IMR-90 (cell line): ENCODE measurements at regions of chr1 and their contacts with region 1.

Region 1: GRCh38 chr1:29245876-29246275 is 9.6 kb downstream of the PTPRU start:
- DNase-seq: peak; percentile 53
- ATAC-seq: peak; percentile 79
- H3K4me3 ChIP-seq: no peak overlapping the region
- H3K27ac ChIP-seq: no peak overlapping the region
- H3K4me1 ChIP-seq: peaks cover 15% of the 10 kb centered on the region
- H3K27me3 ChIP-seq: no peaks in the 10 kb centered on the region
- CTCF ChIP-seq: peak; percentile 63
- POLR2A ChIP-seq: no peak
- RAD21 ChIP-seq: peak; percentile 72

Region 2: GRCh38 chr1:29225361-29225760 is 20.5 kb before region 1 on chr1:
- CTCF ChIA-PET with region 1: no interaction called
- POLR2A ChIA-PET with region 1: no interaction called
- dilution Hi-C with region 1: no loop called
- in situ Hi-C with region 1: no loop called
- intact Hi-C with region 1: no loop called
- DNase-seq: no peak
- ATAC-seq: no peak
- H3K4me3 ChIP-seq: no peak overlapping the region
- H3K27ac ChIP-seq: no peak overlapping the region
- H3K4me1 ChIP-seq: peaks cover 4% of the 10 kb centered on the region
- H3K27me3 ChIP-seq: no peaks in the 10 kb centered on the region
- CTCF ChIP-seq: no peak
- POLR2A ChIP-seq: no peak
- RAD21 ChIP-seq: no peak

Region 3: DNA sequence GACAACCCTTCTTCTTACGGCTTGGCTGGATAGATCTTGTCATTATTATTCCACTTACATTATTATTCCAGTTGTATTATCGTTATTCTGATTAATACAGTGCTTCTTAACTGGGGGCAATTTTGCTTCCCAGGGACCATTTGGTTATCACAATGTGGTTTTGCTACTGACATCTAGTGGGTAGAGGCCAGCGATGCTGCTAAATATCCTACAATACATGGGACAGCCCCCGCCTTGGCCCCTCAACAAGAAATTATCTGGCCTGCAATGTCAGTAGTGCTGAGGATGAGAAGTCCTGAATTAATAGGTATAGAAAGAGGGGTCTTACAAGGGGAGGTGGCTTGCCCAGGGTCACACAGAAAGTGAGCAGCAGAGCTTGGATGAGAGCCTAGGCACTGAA is 96.1 kb after region 1 on chr1:
- CTCF ChIA-PET with region 1: interaction called, 6 read pairs
- POLR2A ChIA-PET with region 1: no interaction called
- dilution Hi-C with region 1: no loop called
- in situ Hi-C with region 1: no loop called
- intact Hi-C with region 1: loop called (anchors 5 kb)
- DNase-seq: no peak
- ATAC-seq: no peak
- H3K4me3 ChIP-seq: no peak overlapping the region
- H3K27ac ChIP-seq: no peak overlapping the region
- H3K4me1 ChIP-seq: no peaks in the 10 kb centered on the region
- H3K27me3 ChIP-seq: peaks cover 33% of the 10 kb centered on the region
- CTCF ChIP-seq: peak; percentile 18; the same call in 1 of the 2 replicates
- POLR2A ChIP-seq: no peak
- RAD21 ChIP-seq: 0 out of 2 replicates have a peak, but pooled peaks have one; percentile 10

Region 4: GRCh38 chr1:29396438-29397255 is 150.8 kb after region 1 on chr1:
- CTCF ChIA-PET with region 1: interaction called, 4 read pairs
- POLR2A ChIA-PET with region 1: no interaction called
- dilution Hi-C with region 1: no loop called
- in situ Hi-C with region 1: no loop called
- intact Hi-C with region 1: loop called (anchors 5 kb)
- DNase-seq: peak; percentile 8
- ATAC-seq: no peak
- H3K4me3 ChIP-seq: no peak overlapping the region
- H3K27ac ChIP-seq: no peak overlapping the region
- H3K4me1 ChIP-seq: no peaks in the 10 kb centered on the region
- H3K27me3 ChIP-seq: no peaks in the 10 kb centered on the region; the same call in none of the 2 replicates
- CTCF ChIP-seq: 0 out of 2 replicates have a peak, but pooled peaks have one; percentile 17
- POLR2A ChIP-seq: no peak
- RAD21 ChIP-seq: no peak

Region 5: DNA sequence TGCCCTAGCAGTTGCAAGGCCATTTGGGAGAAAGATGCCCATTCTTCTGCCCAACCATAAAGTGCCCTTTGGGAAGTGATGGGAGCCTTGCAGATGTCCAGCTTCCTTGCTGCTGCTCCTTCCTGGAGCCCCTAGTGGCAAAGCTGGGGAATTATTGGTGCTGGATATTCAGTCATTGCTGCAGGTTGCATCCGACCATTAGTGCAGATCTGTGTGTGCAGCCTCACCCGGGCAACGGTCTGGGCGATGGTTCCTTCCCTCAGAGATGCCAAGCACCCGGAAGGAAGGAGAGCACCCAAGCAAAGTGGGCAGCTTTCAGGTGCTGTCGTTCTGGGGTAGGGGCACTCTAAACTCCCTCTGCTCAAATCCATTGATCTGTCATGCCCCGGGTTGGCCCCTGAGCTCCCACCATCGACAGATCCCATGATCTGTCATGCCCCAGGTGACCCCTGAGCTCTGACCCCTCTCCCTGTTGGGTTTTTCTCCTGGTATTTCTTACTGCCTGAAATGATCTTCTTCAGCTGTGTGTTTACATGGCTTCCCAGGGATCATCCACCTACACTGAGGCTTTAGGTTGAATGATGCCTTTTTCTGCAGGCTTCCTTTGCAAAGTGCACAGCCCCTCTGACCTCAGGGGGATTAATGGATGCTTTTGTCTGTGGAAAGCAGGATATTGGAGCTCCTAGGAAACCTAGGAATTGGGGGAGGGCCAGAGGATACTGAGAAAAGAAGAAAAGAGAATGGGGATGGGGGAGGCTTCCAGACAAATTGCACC is 457.9 kb after region 1 on chr1:
- CTCF ChIA-PET with region 1: no interaction called
- POLR2A ChIA-PET with region 1: no interaction called
- dilution Hi-C with region 1: no loop called
- in situ Hi-C with region 1: loop called (anchors 10 kb)
- intact Hi-C with region 1: loop called (anchors 5 kb)
- DNase-seq: peak; percentile 54
- ATAC-seq: peak; percentile 76
- H3K4me3 ChIP-seq: no peak overlapping the region
- H3K27ac ChIP-seq: no peak overlapping the region
- H3K4me1 ChIP-seq: peaks cover 4% of the 10 kb centered on the region
- H3K27me3 ChIP-seq: no peaks in the 10 kb centered on the region; the same call in 1 of the 2 replicates
- CTCF ChIP-seq: peak; percentile 74
- POLR2A ChIP-seq: no peak
- RAD21 ChIP-seq: peak; percentile 69

Region 6: GRCh38 chr1:30379684-30380624 is 1134.1 kb after region 1 on chr1:
- CTCF ChIA-PET with region 1: no interaction called
- POLR2A ChIA-PET with region 1: no interaction called
- dilution Hi-C with region 1: no loop called
- in situ Hi-C with region 1: loop called (anchors 10 kb)
- intact Hi-C with region 1: no loop called
- DNase-seq: peak; percentile 64
- ATAC-seq: peak; percentile 93
- H3K4me3 ChIP-seq: no peak overlapping the region
- H3K27ac ChIP-seq: no peak overlapping the region
- H3K4me1 ChIP-seq: no peaks in the 10 kb centered on the region
- H3K27me3 ChIP-seq: peaks cover 3% of the 10 kb centered on the region; the same call in 1 of the 2 replicates
- CTCF ChIP-seq: peak; percentile 87
- POLR2A ChIP-seq: no peak
- RAD21 ChIP-seq: peak; percentile 66